BJ (cell line): ENCODE measurements at regions of chr5 and their contacts with region 1.

Region 1: GRCh38 chr5:171640480-171640879 is 145.1 kb upstream of the SMIM23 start:
- DNase-seq: no peak
- H3K4me3 ChIP-seq: no peak overlapping the region
- H3K27me3 ChIP-seq: peaks cover 7% of the 10 kb centered on the region; the same call in 1 of the 2 replicates
- CTCF ChIP-seq: no peak

Region 2: DNA sequence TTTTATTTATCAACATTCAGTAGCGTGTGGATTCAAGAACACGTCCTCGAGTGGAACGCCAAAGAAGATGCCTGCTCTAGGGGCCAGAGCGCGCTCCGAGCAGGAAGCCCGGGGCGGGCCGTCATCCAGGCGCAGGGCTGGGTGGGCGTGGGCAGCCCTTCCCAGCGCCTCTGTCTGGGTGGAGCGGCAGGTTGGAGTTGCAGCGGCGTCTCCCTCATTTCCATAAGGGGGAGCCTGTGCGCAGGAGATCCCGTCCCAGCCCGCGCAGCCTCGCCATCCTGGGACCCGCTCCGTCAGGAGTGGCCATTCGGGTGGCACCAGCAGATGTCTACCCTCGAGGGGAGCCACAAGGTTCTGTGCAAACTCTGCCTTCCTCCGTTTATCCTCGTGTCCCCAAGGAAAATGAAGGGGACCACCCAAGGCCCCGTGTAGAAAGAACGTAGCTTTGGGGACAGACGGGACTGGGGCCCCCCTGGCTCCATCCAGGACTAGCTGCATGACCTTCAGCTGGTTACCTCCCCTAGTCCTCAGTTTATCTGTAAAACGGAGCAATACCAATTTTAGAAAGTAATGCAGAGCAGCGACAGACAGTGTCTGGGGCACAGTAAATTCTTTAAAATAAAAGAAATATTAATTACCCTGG is 10.3 kb before region 1 on chr5:
- CTCF ChIA-PET with region 1: interaction called, 10 read pairs
- POLR2A ChIA-PET with region 1: no interaction called
- DNase-seq: no peak
- H3K4me3 ChIP-seq: no peak overlapping the region
- H3K27me3 ChIP-seq: peaks cover 17% of the 10 kb centered on the region
- CTCF ChIP-seq: peak; percentile 72